Left cardiac atrium (tissue), 4 donors: ENCODE measurements at regions of chr16 and their contacts with region 1.

Region 1: DNA sequence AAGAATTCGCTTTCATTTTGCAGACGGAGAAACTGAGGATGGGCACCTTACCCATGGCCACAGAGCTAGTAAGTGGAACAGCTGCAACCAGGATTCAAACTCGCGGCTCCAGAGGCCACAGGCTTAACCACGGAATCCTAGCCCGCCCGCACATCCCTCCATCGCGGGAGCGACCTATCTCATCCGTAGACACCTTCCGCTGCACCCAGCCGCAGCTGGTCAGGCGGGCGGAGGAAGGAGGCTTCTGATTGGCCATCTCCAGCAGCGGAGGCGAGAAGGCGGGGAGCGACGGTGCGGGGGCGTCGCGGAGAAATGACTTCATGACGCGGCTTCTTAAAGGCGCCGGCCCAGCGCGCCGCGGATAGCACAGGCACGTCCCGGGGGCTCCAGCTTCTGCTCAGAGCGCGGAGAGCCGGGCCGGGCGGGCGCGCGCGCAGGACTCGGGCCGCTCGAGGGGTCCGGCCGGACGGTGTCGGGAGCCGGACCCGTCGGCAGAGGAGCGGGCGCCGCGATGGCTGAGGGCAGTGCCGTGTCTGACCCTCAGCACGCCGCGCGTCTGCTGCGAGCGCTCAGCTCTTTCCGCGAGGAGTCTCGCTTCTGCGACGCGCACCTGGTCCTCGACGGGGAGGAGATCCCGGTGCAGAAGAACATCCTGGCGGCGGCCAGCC is at the start of gene GAN:
- DNase-seq: peak; percentile 96
- ATAC-seq: peak; percentile 97 to 99
- total RNA-seq, gene GAN: 10.6 to 13.1 TPM

Region 2: GRCh38 chr16:81204798-81205680 is 109.7 kb before region 1 on chr16:
- intact Hi-C with region 1: loop called in 1 of 2 experiments (anchors 10 kb)
- DNase-seq: no peak
- ATAC-seq: peak; percentile 57 to 64

Region 3: GRCh38 chr16:81237282-81237681 is 77.5 kb before region 1 on chr16:
- intact Hi-C with region 1: loop called in 1 of 2 experiments (anchors 1 kb)
- DNase-seq: peak; percentile 72
- ATAC-seq: peak; percentile 96 to 98